Right ventricle myocardium inferior (tissue), 1 donor: ENCODE measurements at regions of chr10 and their contacts with region 1.

Region 1: GRCh38 chr10:69318106-69318866 is 40.0 kb downstream of the HK1 start:
- DNase-seq: peak; percentile 96
- ATAC-seq: peak; percentile 98

Region 2: DNA sequence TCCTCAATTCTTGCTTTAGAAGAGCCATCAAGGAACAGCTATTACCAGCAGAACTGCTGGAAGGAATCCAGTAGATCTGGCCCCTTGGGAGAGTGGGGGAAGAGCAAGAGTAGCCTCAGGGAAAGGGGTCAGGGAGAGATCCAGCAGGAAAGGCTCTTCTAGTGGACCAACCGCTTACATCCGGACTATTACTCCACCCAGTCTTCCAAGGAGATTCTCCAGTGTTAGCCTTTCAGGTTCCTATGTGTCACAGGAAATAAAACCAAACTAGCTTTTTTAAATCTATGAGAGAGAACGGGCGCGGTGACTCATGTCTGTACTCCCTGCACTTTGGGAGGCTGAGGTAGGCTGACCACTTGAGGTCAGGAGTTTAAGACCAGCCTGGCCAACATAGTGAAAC is 723.9 kb before region 1 on chr10:
- intact Hi-C with region 1: no loop called
- DNase-seq: no peak
- ATAC-seq: peak; percentile 23

Region 3: GRCh38 chr10:69237528-69238159 is 80.6 kb before region 1 on chr10:
- intact Hi-C with region 1: loop called (anchors 5 kb)
- DNase-seq: peak; percentile 93
- ATAC-seq: peak; percentile 97

Region 4: DNA sequence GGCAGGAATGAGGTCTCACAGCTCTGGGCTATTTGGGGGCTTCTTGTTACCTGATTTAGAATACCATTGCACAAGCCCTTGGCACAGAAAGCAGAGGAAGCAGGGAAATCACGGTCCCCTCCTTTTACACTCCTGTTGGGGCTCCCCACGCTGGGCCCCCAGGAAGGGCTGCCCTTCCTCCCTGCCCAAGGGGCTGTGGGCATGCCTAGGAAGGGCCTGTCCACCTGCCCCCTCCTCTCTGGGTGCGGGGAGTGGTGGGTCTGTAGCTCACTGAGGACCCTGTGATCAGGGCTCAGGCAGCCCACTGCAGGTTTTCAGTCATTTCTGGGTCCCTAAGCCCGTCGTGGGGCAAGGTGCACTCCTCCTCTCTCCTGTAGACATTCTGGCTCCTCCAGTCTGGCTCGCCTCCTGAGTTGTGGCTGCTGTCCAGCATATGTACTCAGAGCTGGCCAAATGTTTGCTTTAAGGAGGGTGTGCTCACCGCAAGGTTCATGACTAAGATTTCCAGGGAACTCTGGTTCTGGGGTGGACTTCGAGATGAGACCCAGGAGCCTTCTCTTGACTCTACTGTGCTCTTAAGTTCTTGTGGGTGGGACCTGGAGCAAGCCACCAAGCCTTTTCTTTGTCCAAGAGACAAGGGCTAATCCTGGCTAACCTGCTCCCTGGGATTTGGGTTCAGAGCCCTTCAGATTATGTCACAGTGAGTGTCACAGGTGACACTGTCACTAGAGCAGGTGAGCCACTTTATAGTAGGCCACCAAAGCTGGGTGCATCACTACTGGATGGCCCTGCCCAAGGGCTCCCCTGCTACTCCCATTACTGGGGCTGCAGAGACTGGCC is 42.4 kb after region 1 on chr10:
- intact Hi-C with region 1: loop called (anchors 5 kb)
- DNase-seq: peak; percentile 83
- ATAC-seq: peak; percentile 70

Region 5: DNA sequence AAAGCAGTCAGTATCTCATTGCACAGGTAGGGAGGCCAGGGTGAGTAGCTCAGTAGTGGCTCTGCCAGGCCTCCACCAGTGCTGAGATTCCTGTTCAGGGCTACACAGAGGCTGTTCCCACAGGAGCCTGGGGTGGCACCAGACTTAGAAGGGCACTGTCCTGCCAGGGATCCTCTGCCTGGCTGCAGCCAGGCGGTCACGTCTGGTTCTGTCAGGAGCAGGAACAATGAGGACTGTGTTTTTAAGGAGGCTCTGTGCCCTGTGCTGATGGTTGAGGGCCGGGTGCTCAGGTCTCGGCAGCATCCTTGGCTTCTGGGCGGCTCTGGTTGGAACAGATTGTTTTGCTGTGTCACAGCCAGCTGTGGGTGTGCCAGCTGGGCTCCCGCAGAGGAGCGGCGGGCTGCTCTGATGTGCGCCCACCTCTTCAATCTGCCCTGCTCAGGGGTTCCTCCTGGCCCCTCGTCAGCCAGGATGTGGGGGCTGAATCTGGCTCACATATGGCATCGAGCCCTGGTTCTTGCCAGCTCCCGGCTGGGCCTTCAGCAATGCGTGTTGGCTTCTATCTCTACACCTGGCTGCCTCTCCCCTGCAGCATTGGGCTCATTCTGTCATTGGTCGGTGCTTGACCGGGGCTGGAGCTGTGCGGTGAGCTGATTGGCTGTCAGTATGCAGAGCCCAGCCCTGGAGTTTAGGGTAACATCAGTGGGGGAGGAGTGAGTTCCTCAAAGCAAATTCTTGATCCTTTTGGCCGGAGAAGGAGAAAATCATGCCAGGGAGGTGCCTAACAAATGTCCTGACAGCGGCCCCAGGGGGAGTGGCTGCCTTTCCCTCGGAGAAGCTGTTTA is 57.2 kb after region 1 on chr10:
- intact Hi-C with region 1: loop called (anchors 5 kb)
- DNase-seq: no peak
- ATAC-seq: peak; percentile 89

Region 6: GRCh38 chr10:69392481-69393000 is 74.3 kb after region 1 on chr10:
- intact Hi-C with region 1: loop called (anchors 5 kb)
- DNase-seq: peak; percentile 92
- ATAC-seq: peak; percentile 87